Naive thymus-derived CD4-positive, alpha-beta T cell (primary cell): ENCODE measurements at regions of chr3 and their contacts with region 1.

Region 1: GRCh38 chr3:52056968-52057805 is 816 bp upstream of the DUSP7 start:
- DNase-seq: peak; percentile 90 to 100 (median 99)
- ATAC-seq: peak; percentile 93
- H3K4me3 ChIP-seq: peak overlapping the region; percentile 92
- H3K4me3 Mint-ChIP-seq: peak overlapping the region; percentile 90 to 97 (median 94)
- H3K27ac ChIP-seq: peak overlapping the region; percentile 79
- H3K27ac Mint-ChIP-seq: peak overlapping the region; percentile 78 to 97 (median 93)
- H3K4me1 ChIP-seq: peaks cover 34 to 35% of the 10 kb centered on the region in 2 donors
- H3K4me1 Mint-ChIP-seq: peaks cover 26 to 39% (median 26%) of the 10 kb centered on the region in 7 donors
- H3K27me3 ChIP-seq: no peaks in the 10 kb centered on the region
- H3K27me3 Mint-ChIP-seq: peaks cover 0 to 4% (median 0%) of the 10 kb centered on the region in 5 donors

Region 2: DNA sequence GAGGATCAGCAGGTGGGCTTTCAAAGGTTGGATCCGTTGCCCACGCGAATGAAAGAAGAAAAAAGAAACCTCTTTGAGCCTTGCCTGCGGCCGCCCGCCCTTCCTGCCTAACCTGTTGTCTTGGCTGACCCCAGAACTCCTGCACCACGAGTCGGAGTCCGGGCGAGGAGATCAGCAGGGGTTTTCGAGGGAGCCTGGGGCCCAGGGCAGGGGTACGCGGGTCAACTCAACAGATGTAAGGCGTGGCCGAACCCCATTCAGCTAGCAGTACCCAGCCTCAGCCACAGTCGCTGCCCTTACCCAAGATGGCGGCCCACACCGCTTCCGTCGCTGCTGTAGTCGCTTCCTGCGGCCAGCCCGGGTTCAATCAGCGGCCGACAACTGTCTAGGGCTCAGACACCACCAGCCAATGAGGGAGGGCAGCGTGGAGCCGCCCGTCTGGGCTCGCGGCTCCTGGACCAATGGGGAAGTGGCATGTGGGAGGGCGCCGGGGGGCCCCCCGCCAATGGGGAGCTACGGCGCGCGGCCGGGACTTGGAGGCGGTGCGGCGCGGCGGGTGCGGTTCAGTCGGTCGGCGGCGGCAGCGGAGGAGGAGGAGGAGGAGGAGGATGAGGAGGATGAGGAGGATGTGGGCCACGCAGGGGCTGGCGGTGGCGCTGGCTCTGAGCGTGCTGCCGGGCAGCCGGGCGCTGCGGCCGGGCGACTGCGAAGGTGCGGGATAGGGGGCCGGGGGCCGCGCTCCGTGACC is 672.3 kb before region 1 on chr3 and contains the start of gene MANF:
- CTCF ChIA-PET with region 1: no interaction called
- POLR2A ChIA-PET with region 1: no interaction called
- intact Hi-C with region 1: loop called (anchors 2 to 5 kb)
- DNase-seq: peak; percentile 87 to 98 (median 98)
- ATAC-seq: peak; percentile 97
- H3K4me3 ChIP-seq: peak within 1 kb of the TSS; percentile 92
- H3K4me3 Mint-ChIP-seq: peak within 1 kb of the TSS; percentile 89 to 99 (median 98)
- H3K27ac ChIP-seq: peak within 1 kb of the TSS; percentile 98
- H3K27ac Mint-ChIP-seq: peak within 1 kb of the TSS; percentile 98 to 99 (median 99)
- H3K4me1 ChIP-seq: peaks cover 22 to 31% of the 10 kb centered on the region in 2 donors
- H3K4me1 Mint-ChIP-seq: peaks cover 32 to 48% (median 46%) of the 10 kb centered on the region in 7 donors
- H3K27me3 ChIP-seq: no peaks in the 10 kb centered on the region
- H3K27me3 Mint-ChIP-seq: no peaks in the 10 kb centered on the region
- total RNA-seq, gene MANF: 28.2 to 182 (median 68.0) TPM

Region 3: GRCh38 chr3:51941798-51942602 is 115.2 kb before region 1 on chr3 and contains the starts of genes PARP3 and RRP9:
- CTCF ChIA-PET with region 1: interaction called, 16 read pairs
- POLR2A ChIA-PET with region 1: interaction called, 11 read pairs
- intact Hi-C with region 1: loop called (anchors 1 kb)
- DNase-seq: peak; percentile 97 to 100 (median 99)
- ATAC-seq: peak; percentile 98
- H3K4me3 ChIP-seq: peak within 1 kb of the TSS; percentile 78
- H3K4me3 Mint-ChIP-seq: peak within 1 kb of the TSS; percentile 72 to 94 (median 90)
- H3K27ac ChIP-seq: peak within 1 kb of the TSS; percentile 80
- H3K27ac Mint-ChIP-seq: peak within 1 kb of the TSS; percentile 78 to 92 (median 89)
- H3K4me1 ChIP-seq: peaks cover 19 to 23% of the 10 kb centered on the region in 2 donors
- H3K4me1 Mint-ChIP-seq: peaks cover 22 to 40% (median 31%) of the 10 kb centered on the region in 7 donors
- H3K27me3 ChIP-seq: no peaks in the 10 kb centered on the region
- H3K27me3 Mint-ChIP-seq: no peaks in the 10 kb centered on the region
- total RNA-seq, gene PARP3: 7.7 to 21.5 (median 11.2) TPM
- total RNA-seq, gene RRP9: 10.2 to 34.2 (median 16.6) TPM

Region 4: GRCh38 chr3:51962854-51963530 is 94.2 kb before region 1 on chr3:
- CTCF ChIA-PET with region 1: no interaction called
- POLR2A ChIA-PET with region 1: no interaction called
- intact Hi-C with region 1: no loop called
- DNase-seq: no peak
- ATAC-seq: no peak
- H3K4me3 ChIP-seq: no peak overlapping the region
- H3K4me3 Mint-ChIP-seq: no peak overlapping the region
- H3K27ac ChIP-seq: no peak overlapping the region
- H3K27ac Mint-ChIP-seq: no peak overlapping the region
- H3K4me1 ChIP-seq: peaks cover 7% of the 10 kb centered on the region in 2 donors
- H3K4me1 Mint-ChIP-seq: peaks cover 11 to 21% (median 18%) of the 10 kb centered on the region in 7 donors
- H3K27me3 ChIP-seq: no peaks in the 10 kb centered on the region
- H3K27me3 Mint-ChIP-seq: peaks cover 0 to 10% (median 0%) of the 10 kb centered on the region in 5 donors

Region 5: GRCh38 chr3:52041118-52041731 is 16.0 kb before region 1 on chr3:
- CTCF ChIA-PET with region 1: interaction called, 7 read pairs
- POLR2A ChIA-PET with region 1: interaction called, 10 read pairs
- intact Hi-C with region 1: loop called in 1 of 2 experiments (anchors 2 kb)
- DNase-seq: no peak
- ATAC-seq: no peak
- H3K4me3 ChIP-seq: no peak overlapping the region
- H3K4me3 Mint-ChIP-seq: no peak overlapping the region
- H3K27ac ChIP-seq: no peak overlapping the region
- H3K27ac Mint-ChIP-seq: peak overlapping the region in 3 of 9 donors; percentile 28 to 72 (median 41)
- H3K4me1 ChIP-seq: no peaks in the 10 kb centered on the region
- H3K4me1 Mint-ChIP-seq: peaks cover 0 to 34% (median 27%) of the 10 kb centered on the region in 7 donors
- H3K27me3 ChIP-seq: no peaks in the 10 kb centered on the region
- H3K27me3 Mint-ChIP-seq: peaks cover 0 to 9% (median 0%) of the 10 kb centered on the region in 5 donors

Region 6: GRCh38 chr3:52197842-52198668 is 140.9 kb after region 1 on chr3 and contains the start of gene ALAS1:
- CTCF ChIA-PET with region 1: no interaction called
- POLR2A ChIA-PET with region 1: interaction called, 3 read pairs
- intact Hi-C with region 1: loop called (anchors 1 to 5 kb)
- DNase-seq: peak; percentile 86 to 99 (median 94)
- ATAC-seq: peak; percentile 97
- H3K4me3 ChIP-seq: peak within 1 kb of the TSS; percentile 80
- H3K4me3 Mint-ChIP-seq: peak within 1 kb of the TSS; percentile 85 to 98 (median 96)
- H3K27ac ChIP-seq: peak within 1 kb of the TSS; percentile 94
- H3K27ac Mint-ChIP-seq: peak within 1 kb of the TSS; percentile 88 to 98 (median 94)
- H3K4me1 ChIP-seq: peaks cover 25 to 30% of the 10 kb centered on the region in 2 donors
- H3K4me1 Mint-ChIP-seq: peaks cover 33 to 56% (median 49%) of the 10 kb centered on the region in 7 donors
- H3K27me3 ChIP-seq: no peaks in the 10 kb centered on the region
- H3K27me3 Mint-ChIP-seq: no peaks in the 10 kb centered on the region
- total RNA-seq, gene ALAS1: 12.6 to 74.3 (median 27.4) TPM

Region 7: GRCh38 chr3:52455283-52456168 is 398.3 kb after region 1 on chr3 and contains the start of gene NISCH:
- CTCF ChIA-PET with region 1: no interaction called
- POLR2A ChIA-PET with region 1: no interaction called
- intact Hi-C with region 1: loop called in 1 of 2 experiments (anchors 2 kb)
- DNase-seq: peak; percentile 92 to 99 (median 97)
- ATAC-seq: peak; percentile 98
- H3K4me3 ChIP-seq: peak within 1 kb of the TSS; percentile 98
- H3K4me3 Mint-ChIP-seq: peak within 1 kb of the TSS; percentile 87 to 96 (median 93)
- H3K27ac ChIP-seq: peak within 1 kb of the TSS; percentile 88
- H3K27ac Mint-ChIP-seq: peak within 1 kb of the TSS; percentile 96 to 100 (median 99)
- H3K4me1 ChIP-seq: peaks cover 15 to 23% of the 10 kb centered on the region in 2 donors
- H3K4me1 Mint-ChIP-seq: peaks cover 25 to 47% (median 41%) of the 10 kb centered on the region in 7 donors
- H3K27me3 ChIP-seq: no peaks in the 10 kb centered on the region
- H3K27me3 Mint-ChIP-seq: no peaks in the 10 kb centered on the region
- total RNA-seq, gene NISCH: 86.8 to 210 (median 162) TPM

Region 8: GRCh38 chr3:53045518-53046170 is 988.5 kb after region 1 on chr3 and contains the start of gene SFMBT1:
- CTCF ChIA-PET with region 1: no interaction called
- POLR2A ChIA-PET with region 1: no interaction called
- intact Hi-C with region 1: loop called (anchors 2 to 10 kb)
- DNase-seq: peak in 8 of 9 donors; percentile 53 to 75 (median 72)
- ATAC-seq: peak; percentile 71
- H3K4me3 ChIP-seq: peak within 1 kb of the TSS; percentile 77
- H3K4me3 Mint-ChIP-seq: peak within 1 kb of the TSS; percentile 92 to 100 (median 97)
- H3K27ac ChIP-seq: peak within 1 kb of the TSS; percentile 86
- H3K27ac Mint-ChIP-seq: peak within 1 kb of the TSS; percentile 91 to 100 (median 99)
- H3K4me1 ChIP-seq: peaks cover 9 to 23% of the 10 kb centered on the region in 2 donors
- H3K4me1 Mint-ChIP-seq: peaks cover 17 to 53% (median 42%) of the 10 kb centered on the region in 7 donors
- H3K27me3 ChIP-seq: no peaks in the 10 kb centered on the region
- H3K27me3 Mint-ChIP-seq: peaks cover 0 to 17% (median 0%) of the 10 kb centered on the region in 5 donors
- total RNA-seq, gene SFMBT1: 28.4 to 47.1 (median 39.0) TPM